Activated CD4-positive, alpha-beta T cell treated with anti-CD3 and anti-CD28 coated beads for 36 hours (primary cell): ENCODE measurements at regions of chr13 and their contacts with region 1.

Region 1: DNA sequence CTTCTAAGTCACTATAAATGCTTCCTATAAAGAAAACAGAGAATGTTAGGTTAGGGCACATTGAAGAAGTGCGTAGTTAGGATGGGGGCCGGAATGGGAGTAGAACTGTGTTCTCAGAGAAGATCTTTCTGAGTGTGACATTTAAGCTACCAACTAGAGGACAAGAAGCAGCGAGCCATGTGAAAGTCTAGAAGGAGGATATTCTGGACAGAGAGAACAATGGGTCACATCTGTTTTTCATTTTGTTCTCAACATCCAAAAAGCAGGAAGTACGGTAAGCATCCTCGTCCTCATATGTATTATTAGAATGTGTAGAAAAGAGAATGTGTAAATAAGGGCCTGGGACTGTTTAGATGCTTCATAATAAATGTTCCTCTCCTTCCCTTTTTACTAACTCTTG is 44.5 kb upstream of the PARP4 start:
- DNase-seq: no peak
- ATAC-seq: no peak
- H3K4me3 Mint-ChIP-seq: no peak overlapping the region
- H3K27ac Mint-ChIP-seq: no peak overlapping the region
- H3K4me1 Mint-ChIP-seq: peaks cover 10% of the 10 kb centered on the region
- H3K27me3 Mint-ChIP-seq: peaks cover 46% of the 10 kb centered on the region

Region 2: GRCh38 chr13:24307211-24308067 is 249.6 kb before region 1 on chr13:
- CTCF ChIA-PET with region 1: interaction called, 3 read pairs
- POLR2A ChIA-PET with region 1: no interaction called
- intact Hi-C with region 1: loop called in 1 of 2 experiments (anchors 5 kb)
- DNase-seq: no peak
- ATAC-seq: no peak
- H3K4me3 Mint-ChIP-seq: no peak overlapping the region
- H3K27ac Mint-ChIP-seq: no peak overlapping the region
- H3K4me1 Mint-ChIP-seq: no peaks in the 10 kb centered on the region
- H3K27me3 Mint-ChIP-seq: no peaks in the 10 kb centered on the region

Region 3: GRCh38 chr13:24328145-24328544 is 228.9 kb before region 1 on chr13:
- CTCF ChIA-PET with region 1: no interaction called
- POLR2A ChIA-PET with region 1: no interaction called
- intact Hi-C with region 1: loop called (anchors 2 to 10 kb)
- DNase-seq: peak; percentile 19
- ATAC-seq: peak; percentile 49
- H3K4me3 Mint-ChIP-seq: peak overlapping the region; percentile 17
- H3K27ac Mint-ChIP-seq: no peak overlapping the region
- H3K4me1 Mint-ChIP-seq: peaks cover 3% of the 10 kb centered on the region
- H3K27me3 Mint-ChIP-seq: peaks cover 30% of the 10 kb centered on the region

Region 4: DNA sequence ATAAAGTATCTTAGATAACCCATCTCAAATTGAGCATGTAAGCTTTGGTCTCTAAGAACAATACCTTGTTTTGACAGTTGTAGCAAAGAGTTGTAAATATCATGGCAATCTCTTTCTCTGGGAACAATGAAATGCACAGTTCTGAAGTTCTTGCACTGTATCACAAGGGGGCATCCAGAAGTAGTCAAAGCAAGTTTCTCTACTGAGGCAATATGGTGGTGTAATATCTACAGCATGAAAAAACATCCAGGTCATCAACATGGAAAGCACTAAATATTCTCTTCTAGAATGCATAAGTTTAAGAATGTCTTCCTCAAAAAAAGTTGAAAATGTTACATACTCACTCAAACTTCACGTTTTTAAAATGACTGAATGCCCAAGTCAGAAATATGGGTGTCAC is 710.6 kb after region 1 on chr13:
- CTCF ChIA-PET with region 1: no interaction called
- POLR2A ChIA-PET with region 1: no interaction called
- intact Hi-C with region 1: no loop called
- DNase-seq: no peak
- ATAC-seq: peak; percentile 84
- H3K4me3 Mint-ChIP-seq: no peak overlapping the region
- H3K27ac Mint-ChIP-seq: no peak overlapping the region
- H3K4me1 Mint-ChIP-seq: no peaks in the 10 kb centered on the region
- H3K27me3 Mint-ChIP-seq: no peaks in the 10 kb centered on the region